ENCODE measurements at regions of chr7 and their contacts with region 1.

Region 1: DNA sequence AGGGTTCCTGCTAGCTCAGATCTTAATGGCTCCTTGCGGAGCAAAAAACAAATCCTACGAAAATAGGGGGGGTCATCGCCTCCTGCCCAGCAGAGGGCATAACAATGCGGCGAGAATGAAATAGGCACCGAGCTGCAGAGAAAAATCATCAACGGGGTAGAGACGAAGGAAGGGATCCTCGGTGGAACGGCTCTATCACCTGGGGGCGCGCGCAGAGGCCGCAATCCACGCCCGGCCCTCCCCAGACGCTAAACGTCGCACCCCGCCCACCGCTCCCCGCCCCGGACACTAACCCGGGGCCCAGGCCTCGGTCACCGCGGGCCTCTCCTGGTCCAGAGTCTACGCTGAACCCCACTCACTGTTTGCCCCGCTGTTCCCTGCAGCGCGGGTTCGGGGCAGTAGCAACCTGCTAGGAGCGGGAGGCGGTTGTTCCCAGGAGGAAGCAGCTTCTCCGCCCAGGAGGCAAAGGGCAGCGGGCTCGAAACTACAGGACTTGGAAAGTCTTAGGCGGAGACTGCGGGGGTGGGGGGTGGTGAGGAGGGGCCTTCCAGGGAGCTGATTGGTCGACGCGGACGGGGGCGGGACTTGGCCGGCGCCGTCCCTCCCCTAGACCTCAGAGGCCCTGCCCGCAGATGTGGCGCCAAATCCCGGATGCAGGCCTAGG is at the start of gene TCAF1:
- DNase-seq: peak; percentile 79
- H3K4me3 Mint-ChIP-seq: peak within 1 kb of the TSS; percentile 88
- H3K27ac Mint-ChIP-seq: peak within 1 kb of the TSS; percentile 88
- H3K4me1 Mint-ChIP-seq: peaks cover 26% of the 10 kb centered on the region
- H3K27me3 Mint-ChIP-seq: no peaks in the 10 kb centered on the region
- total RNA-seq, gene TCAF1: 13.1 and 13.8 TPM in 2 replicates

Region 2: DNA sequence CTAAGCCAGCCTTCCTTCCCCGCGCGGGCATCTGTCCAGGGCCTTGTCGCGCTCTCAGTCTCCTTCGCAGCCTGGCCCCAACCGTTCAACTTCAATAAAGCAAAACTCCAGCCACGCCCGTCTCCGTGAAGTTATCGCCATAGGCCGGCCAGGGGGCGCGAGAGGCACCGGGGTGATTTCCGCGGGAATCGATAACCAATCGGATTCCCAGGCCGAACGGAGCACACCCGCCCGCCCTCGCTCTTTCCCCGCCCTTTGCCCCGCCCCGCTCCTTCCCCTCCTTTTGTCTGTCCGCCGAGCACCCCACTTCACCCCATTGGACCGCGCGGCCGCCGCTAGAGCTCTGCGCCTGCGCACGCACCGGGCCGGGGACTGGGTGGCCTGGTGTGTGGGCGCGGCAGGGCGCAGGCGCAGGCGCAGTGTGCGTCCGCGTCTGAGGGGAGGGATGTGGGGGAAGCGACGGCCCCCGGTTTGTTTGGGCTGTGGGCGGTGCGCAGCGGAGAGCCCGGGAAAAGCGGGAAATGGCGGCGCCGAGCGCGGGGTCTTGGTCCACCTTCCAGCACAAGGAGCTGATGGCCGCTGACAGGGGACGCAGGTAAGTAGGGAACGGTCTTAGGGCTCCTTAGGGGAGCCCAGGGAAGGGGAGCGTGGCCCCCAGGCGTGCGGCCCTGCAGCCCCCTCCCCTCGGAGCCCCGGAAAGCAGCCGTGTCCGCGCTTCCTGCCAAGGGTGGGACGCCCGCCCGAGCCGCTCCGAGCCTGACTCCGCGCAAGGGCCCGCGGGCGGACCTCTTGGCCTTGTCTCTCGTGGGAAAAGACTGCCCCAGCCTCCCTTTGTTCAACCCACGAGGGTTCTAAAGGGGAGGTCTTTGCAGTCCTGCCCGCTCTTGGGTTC is 613.6 kb before region 1 on chr7 and contains the start of gene CASP2:
- intact Hi-C with region 1: loop called (anchors 5 kb)
- DNase-seq: peak; percentile 98
- H3K4me3 Mint-ChIP-seq: peak within 1 kb of the TSS; percentile 94
- H3K27ac Mint-ChIP-seq: peak within 1 kb of the TSS; percentile 92
- H3K4me1 Mint-ChIP-seq: peaks cover 63% of the 10 kb centered on the region
- H3K27me3 Mint-ChIP-seq: no peaks in the 10 kb centered on the region
- total RNA-seq, gene CASP2: 107 and 110 TPM in 2 replicates

Region 3: DNA sequence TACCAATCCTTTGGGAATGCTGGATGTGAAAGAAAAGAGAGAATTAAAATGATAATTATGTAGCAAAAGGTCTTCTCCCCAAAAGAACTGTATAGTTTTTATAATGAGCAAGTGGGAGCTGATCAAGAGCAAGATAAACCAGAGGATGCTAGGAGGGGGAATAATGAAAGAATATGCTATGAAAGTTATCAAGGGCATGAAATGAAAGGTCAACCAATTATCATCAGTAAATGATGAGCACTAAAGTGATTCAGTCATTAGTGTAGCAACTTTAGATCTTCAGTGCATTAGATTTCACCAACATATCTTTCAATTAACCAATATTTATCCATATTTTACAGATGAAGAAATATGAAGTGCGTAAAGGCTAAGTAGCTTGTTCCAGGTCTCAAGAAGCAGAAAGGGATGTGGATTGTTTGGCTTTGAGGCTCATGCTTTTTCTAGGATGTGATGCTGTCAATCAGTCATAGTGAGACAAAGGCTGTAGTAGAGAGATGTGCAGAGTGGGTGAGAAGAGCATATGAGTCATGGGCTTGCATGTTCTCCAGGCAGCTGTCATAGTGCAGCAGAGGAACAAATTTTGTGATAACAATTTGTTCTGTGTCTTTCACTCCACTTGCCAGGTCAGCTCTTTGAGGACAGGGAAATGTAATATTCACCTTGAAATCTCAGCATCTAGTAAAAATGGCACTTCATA is 27.6 kb after region 1 on chr7:
- intact Hi-C with region 1: loop called (anchors 1 kb)
- DNase-seq: no peak
- H3K4me3 Mint-ChIP-seq: no peak overlapping the region
- H3K27ac Mint-ChIP-seq: no peak overlapping the region
- H3K4me1 Mint-ChIP-seq: peaks cover 25% of the 10 kb centered on the region
- H3K27me3 Mint-ChIP-seq: peaks cover 2% of the 10 kb centered on the region

Region 4: DNA sequence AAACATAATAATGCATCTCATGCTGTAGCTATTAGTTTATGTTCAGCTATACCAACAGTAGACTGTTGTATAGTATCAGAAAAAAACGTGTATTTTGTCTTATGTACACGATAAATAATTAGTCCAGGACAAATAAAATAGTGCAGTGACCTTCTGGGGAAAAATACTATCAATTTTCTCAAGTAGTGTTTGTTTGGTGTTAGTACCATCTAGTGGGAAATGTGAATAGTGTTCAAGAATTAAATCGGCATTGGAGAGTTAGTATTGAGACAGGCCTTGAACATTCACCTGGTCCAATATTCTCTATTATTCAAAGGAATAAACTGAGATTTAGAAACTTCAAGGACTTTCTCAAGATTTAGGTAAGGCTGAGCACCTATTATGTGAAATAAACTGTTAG is 125.3 kb after region 1 on chr7:
- intact Hi-C with region 1: loop called (anchors 2 kb)
- DNase-seq: no peak
- H3K4me3 Mint-ChIP-seq: no peak overlapping the region
- H3K27ac Mint-ChIP-seq: no peak overlapping the region
- H3K4me1 Mint-ChIP-seq: no peaks in the 10 kb centered on the region
- H3K27me3 Mint-ChIP-seq: peaks cover 11% of the 10 kb centered on the region

Region 5: DNA sequence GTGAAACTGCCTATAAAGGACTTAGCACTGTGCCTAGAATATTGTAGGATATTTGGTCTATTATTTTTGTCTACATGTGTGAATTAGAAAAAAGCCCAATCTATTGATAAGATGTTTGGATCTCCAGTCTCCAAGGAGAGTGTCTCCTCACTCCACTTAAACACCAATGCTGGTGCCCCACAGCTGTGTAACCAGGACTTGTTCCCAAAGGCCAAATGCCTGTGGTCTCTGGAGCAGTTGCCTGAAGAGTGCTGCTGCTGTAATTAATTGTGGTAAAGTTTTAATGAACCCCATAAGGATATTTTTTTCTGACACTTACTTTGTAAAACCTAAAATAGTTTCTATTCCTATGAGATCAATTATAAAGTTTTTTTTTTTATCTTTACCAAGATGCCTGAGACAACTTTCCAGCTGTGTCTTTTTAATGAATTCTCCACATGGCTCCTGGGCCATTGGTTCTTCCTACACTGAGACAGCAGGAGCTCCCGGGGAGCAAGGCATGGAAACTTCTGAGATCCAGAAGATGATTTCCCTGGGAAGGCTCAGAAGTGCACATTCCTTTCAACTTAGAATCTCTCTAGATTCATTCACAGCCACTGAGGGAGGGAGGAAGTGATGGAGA is 135.7 kb after region 1 on chr7:
- intact Hi-C with region 1: no loop called
- DNase-seq: no peak
- H3K4me3 Mint-ChIP-seq: no peak overlapping the region
- H3K27ac Mint-ChIP-seq: no peak overlapping the region
- H3K4me1 Mint-ChIP-seq: no peaks in the 10 kb centered on the region
- H3K27me3 Mint-ChIP-seq: peaks cover 6% of the 10 kb centered on the region

Region 6: DNA sequence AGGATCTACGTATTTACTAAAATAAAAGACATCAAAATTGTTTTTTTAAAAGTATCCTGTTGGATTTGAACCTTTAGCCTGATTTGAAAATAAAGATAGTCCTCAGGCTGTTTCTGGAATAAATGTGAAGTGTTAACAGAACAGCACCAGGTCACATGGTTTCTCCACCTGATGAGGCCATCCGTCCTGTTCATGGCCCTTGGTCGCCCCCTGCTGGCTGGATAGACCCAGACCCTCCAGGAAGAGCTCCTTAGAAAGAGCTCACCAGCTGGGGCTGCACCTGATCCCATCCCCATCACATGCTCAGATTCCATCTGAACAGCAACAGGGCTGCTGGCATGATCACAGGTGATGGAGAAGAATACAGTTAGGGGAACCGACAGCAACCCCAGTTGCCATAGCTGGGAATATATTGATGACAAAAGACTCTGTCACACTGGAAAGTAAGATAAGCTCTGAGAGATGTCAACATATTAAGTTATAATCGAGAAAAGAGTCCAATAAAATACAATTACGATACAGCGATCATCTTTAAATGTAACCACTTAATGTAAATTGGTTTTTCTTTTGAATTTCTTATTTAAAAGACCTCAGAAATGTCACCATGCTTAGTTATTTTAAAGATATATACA is 226.0 kb after region 1 on chr7:
- intact Hi-C with region 1: loop called (anchors 1 kb)
- DNase-seq: peak; percentile 72
- H3K4me3 Mint-ChIP-seq: no peak overlapping the region
- H3K27ac Mint-ChIP-seq: no peak overlapping the region
- H3K4me1 Mint-ChIP-seq: no peaks in the 10 kb centered on the region
- H3K27me3 Mint-ChIP-seq: no peaks in the 10 kb centered on the region

Region 7: DNA sequence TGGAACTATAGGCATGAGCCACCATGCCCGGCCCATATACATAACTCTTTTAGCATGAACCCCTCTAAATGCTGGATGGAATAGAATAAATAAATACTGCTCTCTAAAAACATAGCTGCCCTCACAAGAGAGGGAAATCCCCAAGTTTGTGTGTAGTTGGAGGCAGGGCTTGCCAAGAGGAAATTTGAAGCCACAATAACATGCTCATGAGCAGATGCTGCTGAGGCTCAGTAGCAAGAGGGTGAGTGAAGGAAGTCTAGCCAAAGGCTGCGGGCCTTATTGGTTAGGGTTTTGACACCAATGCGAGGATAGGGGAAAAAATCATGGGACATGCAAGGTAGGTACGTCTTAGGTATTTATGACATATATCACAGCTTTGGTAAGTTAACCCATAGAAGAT is 916.7 kb after region 1 on chr7:
- intact Hi-C with region 1: loop called (anchors 5 kb)
- DNase-seq: peak; percentile 49
- H3K4me3 Mint-ChIP-seq: peak overlapping the region; percentile 9
- H3K27ac Mint-ChIP-seq: peak overlapping the region; percentile 83
- H3K4me1 Mint-ChIP-seq: peaks cover 71% of the 10 kb centered on the region
- H3K27me3 Mint-ChIP-seq: no peaks in the 10 kb centered on the region

Measured in activated T-helper 1 cell treated with anti-CD3 and anti-CD28 coated beads, Interleukin-12 subunit alpha, Interleukin-12 subunit beta, Interleukin-2, Interleukin-4 antibody, amounts not matched to agents 30 ng/mL and 10 ng/mL and 1 ng/mL, durations not matched to agents 14 hours and 24 hours and 36 hours (primary cell).